HEK293 (cell line): ENCODE measurements at regions of chr15 and their contacts with region 1.

Region 1: DNA sequence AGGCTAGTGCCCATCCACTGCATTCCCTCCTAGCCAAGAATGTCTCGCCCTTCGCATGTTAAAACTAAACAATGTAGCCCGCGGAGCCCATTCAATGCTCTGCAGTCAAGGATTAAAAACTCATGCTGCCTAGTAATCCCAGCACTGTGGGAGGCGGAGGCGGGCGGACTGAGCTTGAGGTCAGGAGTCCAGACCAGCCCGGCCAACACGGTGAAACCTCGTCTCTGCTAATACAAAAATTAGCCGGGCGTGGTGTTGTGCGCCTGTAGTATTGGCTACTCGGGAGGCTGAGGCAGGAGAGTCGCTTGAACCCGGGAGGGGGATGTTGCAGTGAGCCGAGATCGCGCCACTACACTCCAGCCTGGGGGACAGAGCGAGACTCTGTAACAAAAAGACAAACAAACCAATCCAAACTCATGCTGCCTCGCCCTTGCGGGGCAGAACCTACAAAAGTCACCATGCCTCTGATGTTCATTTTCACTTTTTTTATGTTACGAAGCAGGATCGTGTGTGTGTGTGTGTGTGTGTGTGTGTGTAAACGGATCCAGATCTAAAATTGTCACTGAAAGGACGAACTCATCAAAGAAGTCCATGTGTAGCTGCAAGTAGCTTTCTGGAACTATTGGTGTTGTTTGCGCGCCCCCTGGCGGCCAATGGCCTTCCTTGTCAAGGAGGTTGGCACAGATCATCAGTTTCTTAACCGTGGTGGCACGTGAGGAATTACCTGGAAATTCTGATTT is 54.8 kb upstream of the SPESP1 start:
- H3K4me3 ChIP-seq: peak overlapping the region; percentile 3
- H3K27ac ChIP-seq: no peak overlapping the region
- H3K4me1 ChIP-seq: no peaks in the 10 kb centered on the region
- CTCF ChIP-seq: peak; percentile 98

Region 2: DNA sequence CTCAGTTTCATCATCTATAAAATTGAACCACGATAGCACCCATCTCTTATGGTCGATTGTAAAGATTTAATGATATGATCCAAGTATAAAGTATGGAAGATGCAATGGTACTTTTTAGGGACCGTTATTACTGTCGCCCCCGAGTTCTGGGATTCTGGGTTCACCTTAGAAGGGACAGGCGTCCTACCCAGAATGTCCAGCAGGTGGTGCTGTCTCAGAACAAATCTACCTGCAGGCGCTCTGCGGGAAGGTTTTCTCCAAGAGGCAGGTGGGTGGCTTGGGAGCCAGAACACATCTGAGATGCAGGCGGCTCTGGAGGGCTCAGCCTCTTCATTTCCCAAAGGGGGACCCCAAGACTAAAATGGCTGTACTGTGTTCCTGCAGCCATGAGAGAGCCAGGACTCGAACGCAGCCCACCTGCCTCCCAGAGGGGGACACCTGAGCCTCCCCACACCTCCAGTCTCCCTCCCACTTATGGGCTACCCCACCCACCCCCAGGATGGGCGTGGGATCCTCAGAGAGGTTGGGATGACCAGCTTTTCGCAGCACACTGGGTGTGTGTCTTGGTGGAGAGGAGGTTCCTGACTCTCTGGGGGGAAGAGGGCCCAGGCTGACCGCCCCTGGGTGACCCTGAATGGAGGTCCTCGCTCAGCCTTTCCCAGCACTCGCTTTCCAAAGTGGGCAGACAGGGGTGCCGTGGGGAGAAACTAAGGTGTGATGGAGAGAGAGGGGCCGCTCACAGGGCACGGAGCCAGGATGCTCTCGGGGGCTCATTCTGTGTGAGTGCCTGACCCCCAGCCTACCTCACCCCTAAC is 324.9 kb before region 1 on chr15:
- CTCF ChIA-PET with region 1: interaction called, 61 read pairs
- POLR2A ChIA-PET with region 1: interaction called, 6 read pairs
- H3K4me3 ChIP-seq: no peak overlapping the region
- H3K27ac ChIP-seq: no peak overlapping the region
- H3K4me1 ChIP-seq: no peaks in the 10 kb centered on the region
- CTCF ChIP-seq: peak; percentile 78

Region 3: GRCh38 chr15:68730471-68730919 is 145.1 kb before region 1 on chr15:
- CTCF ChIA-PET with region 1: interaction called, 59 read pairs
- POLR2A ChIA-PET with region 1: no interaction called
- H3K4me3 ChIP-seq: no peak overlapping the region
- H3K27ac ChIP-seq: no peak overlapping the region
- H3K4me1 ChIP-seq: no peaks in the 10 kb centered on the region; the same call in 1 of the 2 replicates
- CTCF ChIP-seq: peak; percentile 74

Region 4: DNA sequence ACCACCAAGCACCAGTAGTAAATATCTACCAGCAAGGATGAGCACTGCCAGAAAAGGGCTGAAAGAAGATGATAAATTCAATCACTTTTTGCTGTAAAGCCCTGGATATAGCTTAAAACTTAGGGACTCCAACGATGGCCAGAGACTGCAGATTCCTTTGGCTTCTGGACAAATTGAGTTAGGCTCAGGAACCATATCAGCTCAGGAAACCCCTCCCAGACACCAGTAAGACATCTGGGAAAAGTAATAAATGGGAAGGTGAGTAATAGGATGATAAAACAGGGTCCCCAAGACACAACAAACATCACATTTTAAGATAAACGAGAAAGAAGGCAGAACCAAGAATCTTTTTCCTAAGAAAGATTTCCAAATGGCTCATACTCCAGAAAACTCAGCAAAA is 119.8 kb before region 1 on chr15:
- CTCF ChIA-PET with region 1: no interaction called
- POLR2A ChIA-PET with region 1: no interaction called
- H3K4me3 ChIP-seq: no peak overlapping the region
- H3K27ac ChIP-seq: no peak overlapping the region
- H3K4me1 ChIP-seq: no peaks in the 10 kb centered on the region
- CTCF ChIP-seq: no peak

Region 5: GRCh38 chr15:68783226-68784058 is 92.1 kb before region 1 on chr15:
- CTCF ChIA-PET with region 1: interaction called, 46 read pairs
- POLR2A ChIA-PET with region 1: no interaction called
- H3K4me3 ChIP-seq: no peak overlapping the region
- H3K27ac ChIP-seq: no peak overlapping the region
- H3K4me1 ChIP-seq: no peaks in the 10 kb centered on the region
- CTCF ChIP-seq: peak; percentile 61

Region 6: GRCh38 chr15:68846851-68847439 is 28.6 kb before region 1 on chr15:
- CTCF ChIA-PET with region 1: interaction called, 12 read pairs
- POLR2A ChIA-PET with region 1: no interaction called
- H3K4me3 ChIP-seq: no peak overlapping the region
- H3K27ac ChIP-seq: no peak overlapping the region
- H3K4me1 ChIP-seq: no peaks in the 10 kb centered on the region
- CTCF ChIP-seq: no peak

Region 7: GRCh38 chr15:68900027-68900426 is 24.5 kb after region 1 on chr15:
- CTCF ChIA-PET with region 1: interaction called, 12 read pairs
- POLR2A ChIA-PET with region 1: no interaction called
- H3K4me3 ChIP-seq: no peak overlapping the region
- H3K27ac ChIP-seq: no peak overlapping the region
- H3K4me1 ChIP-seq: no peaks in the 10 kb centered on the region; the same call in 1 of the 2 replicates
- CTCF ChIP-seq: no peak